Colonic mucosa (tissue), 4 donors: ENCODE measurements at regions of chr1 and their contacts with region 1.

Region 1: GRCh38 chr1:84620720-84621313 is 46.6 kb upstream of the CTBS start:
- DNase-seq: peak; percentile 76
- H3K4me3 ChIP-seq: peak overlapping the region; percentile 50
- H3K27ac ChIP-seq: peak overlapping the region; percentile 7
- H3K4me1 ChIP-seq: no peaks in the 10 kb centered on the region
- H3K27me3 ChIP-seq: no peaks in the 10 kb centered on the region
- CTCF ChIP-seq: peak; percentile 97

Region 2: GRCh38 chr1:83931658-83932253 is 689.1 kb before region 1 on chr1:
- intact Hi-C with region 1: loop called (anchors 5 kb)
- DNase-seq: peak; percentile 33
- H3K4me3 ChIP-seq: no peak overlapping the region
- H3K27ac ChIP-seq: no peak overlapping the region
- H3K4me1 ChIP-seq: no peaks in the 10 kb centered on the region
- H3K27me3 ChIP-seq: no peaks in the 10 kb centered on the region
- CTCF ChIP-seq: peak; percentile 57

Region 3: DNA sequence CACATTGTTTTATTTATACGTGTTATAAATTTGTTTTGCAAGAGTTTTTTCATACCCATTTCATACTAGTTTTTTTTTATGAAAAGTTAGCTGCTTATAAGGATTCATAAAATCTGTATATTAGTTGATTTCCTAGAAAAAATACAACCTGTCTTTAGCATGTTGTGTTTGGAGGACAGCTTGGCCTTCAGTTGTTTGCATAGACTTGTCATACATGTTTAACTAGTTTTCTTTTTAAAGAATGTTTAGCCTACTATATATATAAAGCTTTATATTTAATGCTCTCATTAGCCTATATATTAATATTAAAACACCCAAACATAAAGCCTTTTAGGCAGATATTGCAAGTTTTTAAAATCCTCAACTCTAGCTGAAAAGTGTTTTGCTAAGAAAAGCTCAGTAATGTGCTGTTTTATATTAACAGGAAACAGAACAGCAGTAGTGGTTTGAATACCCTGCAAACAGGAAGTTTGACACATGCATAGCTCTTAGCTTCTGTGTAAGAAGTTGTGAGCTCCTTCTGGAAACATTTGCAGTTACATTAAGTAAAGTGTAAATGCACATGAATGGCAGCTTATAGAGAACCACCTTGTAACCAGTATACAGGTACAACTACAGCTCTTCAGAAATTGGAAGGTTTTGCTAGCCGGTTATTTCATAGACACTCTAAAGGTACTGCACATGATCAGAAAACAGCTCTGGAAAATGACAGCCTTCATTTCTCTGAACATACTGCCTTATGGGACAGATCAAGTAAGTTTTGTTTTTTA is 476.8 kb before region 1 on chr1 and contains the start of gene PRKACB:
- intact Hi-C with region 1: loop called (anchors 5 kb)
- DNase-seq: no peak
- H3K4me3 ChIP-seq: peak within 1 kb of the TSS; percentile 25
- H3K27ac ChIP-seq: peak within 1 kb of the TSS; percentile 70
- H3K4me1 ChIP-seq: no peaks in the 10 kb centered on the region
- H3K27me3 ChIP-seq: no peaks in the 10 kb centered on the region
- CTCF ChIP-seq: no peak
- total RNA-seq, gene PRKACB: 85.2 to 149 TPM